Heart left ventricle (tissue), 16 donors: ENCODE measurements at regions of chr10 and their contacts with region 1.

Region 1: GRCh38 chr10:69237528-69238159 is 17.5 kb downstream of the HKDC1 start:
- DNase-seq: peak; percentile 82 to 92 (median 86)
- ATAC-seq: peak; percentile 92 to 99 (median 98)
- H3K4me3 ChIP-seq: peak overlapping the region in 1 of 12 donors; percentile 16
- H3K27ac ChIP-seq: no peak overlapping the region
- H3K4me1 ChIP-seq: peaks cover 0 to 10% (median 3%) of the 10 kb centered on the region in 12 donors
- H3K27me3 ChIP-seq: no peaks in the 10 kb centered on the region
- CTCF ChIP-seq: peak; percentile 80 to 96 (median 92)
- POLR2A ChIP-seq: no peak

Region 2: DNA sequence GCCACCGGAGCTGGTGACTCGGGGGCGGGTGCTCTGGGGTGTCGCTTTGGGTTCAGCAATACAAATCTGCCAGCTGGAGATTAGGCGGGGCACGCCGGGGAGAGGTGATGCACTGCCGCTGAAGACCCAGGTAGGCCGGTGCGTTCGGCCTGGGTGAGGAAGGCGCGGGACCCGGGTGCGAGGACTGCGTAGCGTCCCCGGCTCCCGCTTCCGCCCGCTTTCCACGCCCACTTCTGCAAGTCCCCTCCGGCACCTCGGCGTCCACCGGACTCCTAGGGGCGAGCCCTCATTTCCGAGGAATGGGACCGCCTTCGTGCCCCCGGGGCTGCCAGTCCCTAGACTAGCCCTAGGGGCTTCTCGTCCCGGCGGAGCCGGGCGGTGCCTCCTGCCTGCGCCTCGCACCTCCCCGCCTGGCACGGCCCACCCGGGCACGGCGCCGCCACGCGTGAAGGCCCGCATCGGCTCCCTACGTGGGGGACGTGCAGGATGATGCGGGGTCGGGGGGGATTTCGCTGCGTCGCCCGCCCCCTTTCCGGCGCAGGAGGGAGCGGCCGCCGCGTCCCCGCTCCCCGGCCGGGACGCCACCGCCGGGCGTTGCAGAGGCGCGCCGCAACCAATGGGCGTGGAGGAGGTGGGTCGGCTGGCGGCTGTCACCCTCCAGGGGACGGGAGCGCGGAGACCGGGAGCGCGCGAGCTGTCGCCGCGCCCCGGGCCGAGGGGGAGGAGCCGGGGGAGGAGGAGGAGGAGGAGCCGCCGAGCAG is 80.6 kb after region 1 on chr10:
- intact Hi-C with region 1: loop called in 2 of 10 experiments (anchors 5 to 10 kb)
- DNase-seq: peak; percentile 94 to 96 (median 95)
- ATAC-seq: peak; percentile 93 to 97 (median 96)
- H3K4me3 ChIP-seq: peak overlapping the region; percentile 74 to 100 (median 94)
- H3K27ac ChIP-seq: peak overlapping the region; percentile 90 to 98 (median 95)
- H3K4me1 ChIP-seq: peaks cover 8 to 51% (median 33%) of the 10 kb centered on the region in 12 donors
- H3K27me3 ChIP-seq: no peaks in the 10 kb centered on the region
- CTCF ChIP-seq: peak in 2 of 12 donors; percentile 11 to 21
- POLR2A ChIP-seq: peak in 1 of 2 donors; percentile 90

Region 3: DNA sequence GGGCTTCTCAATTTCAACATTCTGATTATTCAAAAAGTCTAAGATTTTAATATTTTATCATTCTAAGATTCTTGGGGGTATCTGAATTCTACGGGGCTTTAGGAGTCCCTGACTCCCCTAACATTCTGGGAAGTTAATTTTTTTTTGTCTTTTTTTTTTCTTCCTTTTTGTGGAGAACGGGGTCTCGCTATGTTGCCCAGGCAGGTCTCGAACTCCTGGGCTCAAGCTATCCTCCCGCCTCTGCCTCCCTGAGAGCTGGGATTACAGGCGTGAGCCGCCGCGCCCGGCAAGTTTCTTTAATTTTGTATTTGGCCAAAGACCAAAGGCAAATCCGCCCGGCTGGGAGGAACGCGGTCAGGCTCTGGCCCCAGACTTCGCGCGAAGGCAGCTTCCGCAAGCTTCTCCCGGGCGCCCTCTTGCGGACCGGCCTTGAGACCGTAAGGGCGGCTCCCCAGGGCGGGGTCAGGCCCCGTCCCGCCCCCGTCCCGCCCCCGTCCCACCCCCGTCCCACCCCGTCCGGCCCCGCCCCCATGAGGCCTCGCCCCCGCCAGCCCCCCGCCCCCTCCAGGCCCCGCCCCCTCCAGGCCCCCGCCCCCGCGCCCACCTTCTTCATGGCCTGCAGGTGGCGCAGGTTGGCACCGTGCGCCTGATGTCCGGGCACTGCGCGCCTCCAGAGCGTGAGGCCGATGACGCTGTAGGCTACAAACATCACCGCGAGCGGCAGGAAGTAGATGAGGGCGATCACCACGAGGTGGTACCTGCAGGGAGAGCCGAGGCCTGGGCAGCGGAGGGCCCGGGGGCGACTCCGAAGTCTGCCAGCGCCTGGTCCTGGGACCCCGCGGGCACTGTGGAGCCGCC is 170.9 kb after region 1 on chr10:
- intact Hi-C with region 1: loop called in 4 of 10 experiments (anchors 5 kb)
- DNase-seq: peak; percentile 95 to 97 (median 97)
- ATAC-seq: peak; percentile 85 to 90 (median 89)
- H3K4me3 ChIP-seq: peak overlapping the region in 10 of 12 donors; percentile 29 to 61 (median 50)
- H3K27ac ChIP-seq: peak overlapping the region; percentile 47 to 93 (median 86)
- H3K4me1 ChIP-seq: peaks cover 0 to 56% (median 39%) of the 10 kb centered on the region in 12 donors
- H3K27me3 ChIP-seq: no peaks in the 10 kb centered on the region
- CTCF ChIP-seq: peak; percentile 78 to 97 (median 90)
- POLR2A ChIP-seq: peak in 1 of 2 donors; percentile 27

Region 4: GRCh38 chr10:69515699-69516259 is 278.1 kb after region 1 on chr10:
- intact Hi-C with region 1: loop called in 2 of 10 experiments (anchors 5 kb)
- DNase-seq: peak; percentile 50 to 83 (median 61)
- ATAC-seq: peak; percentile 48 to 88 (median 84)
- H3K4me3 ChIP-seq: no peak overlapping the region
- H3K27ac ChIP-seq: no peak overlapping the region
- H3K4me1 ChIP-seq: no peaks in the 10 kb centered on the region
- H3K27me3 ChIP-seq: peaks cover 0 to 4% (median 0%) of the 10 kb centered on the region in 9 donors
- CTCF ChIP-seq: peak; percentile 52 to 87 (median 64)
- POLR2A ChIP-seq: no peak